ENCODE measurements at regions of chr6 and their contacts with region 1.

Region 1: DNA sequence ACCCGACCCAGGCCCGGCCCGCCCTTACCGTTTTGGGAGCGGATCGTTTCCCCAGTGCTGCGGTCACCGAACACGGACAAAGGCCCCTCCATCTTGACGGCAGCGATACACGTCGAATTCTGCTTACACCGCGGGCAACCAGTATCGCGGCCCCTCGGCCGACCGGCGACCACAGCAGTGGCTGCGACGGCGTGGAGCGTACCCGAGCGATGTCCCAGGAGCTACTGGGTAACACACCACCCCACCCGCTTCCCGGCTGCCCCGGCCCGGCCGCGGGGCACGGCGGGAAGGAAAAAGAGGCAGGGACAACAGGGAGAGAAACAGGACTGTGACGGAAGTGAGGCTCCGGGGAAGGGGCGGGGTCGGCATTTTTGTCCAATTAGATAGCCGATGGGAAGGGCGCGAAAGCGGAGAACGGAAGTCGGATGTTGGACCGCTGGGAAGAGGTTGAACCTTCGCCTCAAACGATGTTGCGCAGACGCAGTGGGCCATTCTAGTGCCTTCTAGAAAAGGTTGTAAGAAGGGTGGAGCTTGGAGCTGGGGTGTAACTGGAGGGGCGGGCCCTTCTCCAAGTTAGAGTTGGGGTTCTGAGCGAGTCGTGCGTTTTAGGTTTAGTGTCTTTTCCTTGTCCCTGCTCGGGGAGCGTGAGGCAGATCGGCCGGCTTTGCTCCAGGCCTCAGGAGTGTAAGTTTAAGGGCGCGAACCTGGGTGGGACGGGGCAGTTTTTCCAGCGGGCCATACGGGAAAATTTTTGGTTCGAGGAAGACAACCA is at the start of gene TCP1:
- DNase-seq: peak; percentile 96 to 100 (median 99)
- ATAC-seq: peak; percentile 81
- H3K4me3 ChIP-seq: peak within 1 kb of the TSS; percentile 86 to 99
- H3K4me3 Mint-ChIP-seq: peak within 1 kb of the TSS; percentile 99
- H3K27ac ChIP-seq: peak within 1 kb of the TSS; percentile 89 to 96
- H3K27ac Mint-ChIP-seq: peak within 1 kb of the TSS; percentile 98
- H3K4me1 ChIP-seq: peaks cover 57% of the 10 kb centered on the region
- H3K4me1 Mint-ChIP-seq: peaks cover 69% of the 10 kb centered on the region
- H3K27me3 ChIP-seq: no peaks in the 10 kb centered on the region
- H3K27me3 Mint-ChIP-seq: no peaks in the 10 kb centered on the region
- CTCF ChIP-seq: no peak
- total RNA-seq, gene TCP1: 221 to 222 TPM

Region 2: GRCh38 chr6:159726918-159727716 is 62.4 kb before region 1 on chr6 and contains the start of gene WTAP:
- CTCF ChIA-PET with region 1: interaction called, 4 read pairs
- POLR2A ChIA-PET with region 1: interaction called, 91 read pairs
- intact Hi-C with region 1: loop called (anchors 1 kb)
- DNase-seq: peak; percentile 94 to 99 (median 97)
- ATAC-seq: peak; percentile 88
- H3K4me3 ChIP-seq: peak within 1 kb of the TSS; percentile 88 to 94
- H3K4me3 Mint-ChIP-seq: peak within 1 kb of the TSS; percentile 88
- H3K27ac ChIP-seq: peak within 1 kb of the TSS; percentile 93 to 94
- H3K27ac Mint-ChIP-seq: peak within 1 kb of the TSS; percentile 99
- H3K4me1 ChIP-seq: peaks cover 51% of the 10 kb centered on the region
- H3K4me1 Mint-ChIP-seq: peaks cover 58% of the 10 kb centered on the region
- H3K27me3 ChIP-seq: no peaks in the 10 kb centered on the region
- H3K27me3 Mint-ChIP-seq: no peaks in the 10 kb centered on the region
- CTCF ChIP-seq: no peak
- total RNA-seq, gene WTAP: 224 to 226 TPM

Region 3: GRCh38 chr6:159761873-159762680 is 27.5 kb before region 1 on chr6 and contains the start of gene ACAT2:
- CTCF ChIA-PET with region 1: interaction called, 6 read pairs
- POLR2A ChIA-PET with region 1: interaction called, 60 read pairs
- intact Hi-C with region 1: loop called (anchors 1 kb)
- DNase-seq: peak; percentile 81 to 96 (median 91)
- ATAC-seq: peak; percentile 86
- H3K4me3 ChIP-seq: peak within 1 kb of the TSS; percentile 85 to 99
- H3K4me3 Mint-ChIP-seq: peak within 1 kb of the TSS; percentile 96
- H3K27ac ChIP-seq: peak within 1 kb of the TSS; percentile 97 to 99
- H3K27ac Mint-ChIP-seq: peak within 1 kb of the TSS; percentile 97
- H3K4me1 ChIP-seq: peaks cover 16% of the 10 kb centered on the region
- H3K4me1 Mint-ChIP-seq: peaks cover 29% of the 10 kb centered on the region
- H3K27me3 ChIP-seq: no peaks in the 10 kb centered on the region
- H3K27me3 Mint-ChIP-seq: no peaks in the 10 kb centered on the region
- CTCF ChIP-seq: no peak
- total RNA-seq, gene ACAT2: 23.3 to 24.1 TPM

Region 4: GRCh38 chr6:159833556-159833955 is 44.0 kb after region 1 on chr6:
- CTCF ChIA-PET with region 1: no interaction called
- POLR2A ChIA-PET with region 1: interaction called, 10 read pairs
- intact Hi-C with region 1: no loop called
- DNase-seq: no peak
- ATAC-seq: no peak
- H3K4me3 ChIP-seq: no peak overlapping the region
- H3K4me3 Mint-ChIP-seq: peak overlapping the region; percentile 15
- H3K27ac ChIP-seq: no peak overlapping the region
- H3K27ac Mint-ChIP-seq: peak overlapping the region; percentile 49
- H3K4me1 ChIP-seq: peaks cover 30% of the 10 kb centered on the region
- H3K4me1 Mint-ChIP-seq: peaks cover 41% of the 10 kb centered on the region
- H3K27me3 ChIP-seq: no peaks in the 10 kb centered on the region
- H3K27me3 Mint-ChIP-seq: no peaks in the 10 kb centered on the region
- CTCF ChIP-seq: no peak

Region 5: GRCh38 chr6:159941286-159942113 is 151.9 kb after region 1 on chr6:
- CTCF ChIA-PET with region 1: no interaction called
- POLR2A ChIA-PET with region 1: no interaction called
- intact Hi-C with region 1: loop called in 1 of 2 experiments (anchors 5 kb)
- DNase-seq: peak in 6 of 9 experiments; percentile 9 to 82 (median 23)
- ATAC-seq: peak; percentile 84
- H3K4me3 ChIP-seq: no peak overlapping the region
- H3K4me3 Mint-ChIP-seq: no peak overlapping the region
- H3K27ac ChIP-seq: no peak overlapping the region
- H3K27ac Mint-ChIP-seq: no peak overlapping the region
- H3K4me1 ChIP-seq: no peaks in the 10 kb centered on the region
- H3K4me1 Mint-ChIP-seq: peaks cover 3% of the 10 kb centered on the region
- H3K27me3 ChIP-seq: no peaks in the 10 kb centered on the region
- H3K27me3 Mint-ChIP-seq: no peaks in the 10 kb centered on the region
- CTCF ChIP-seq: peak; percentile 49

Region 6: DNA sequence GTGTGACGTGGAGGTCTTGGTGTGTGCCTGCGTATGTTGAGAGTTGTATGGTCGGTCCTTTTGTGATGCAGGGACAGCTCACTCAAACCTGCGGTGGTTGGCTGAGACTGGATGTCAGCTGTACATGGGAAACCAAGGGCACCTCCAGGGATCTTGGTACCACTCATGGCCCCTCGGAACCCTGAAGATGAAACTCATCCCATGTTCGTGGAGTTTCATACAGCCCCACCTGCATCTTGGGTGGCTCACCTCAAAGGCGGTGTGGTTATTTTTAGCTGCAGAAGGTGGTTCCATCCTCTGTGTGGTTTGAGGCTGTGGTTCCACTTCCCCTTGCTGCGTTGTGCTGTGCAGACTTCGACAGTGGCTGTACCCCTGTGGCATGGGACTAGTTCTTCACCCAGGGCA is 279.5 kb after region 1 on chr6:
- CTCF ChIA-PET with region 1: no interaction called
- POLR2A ChIA-PET with region 1: no interaction called
- intact Hi-C with region 1: loop called in 1 of 2 experiments (anchors 10 kb)
- DNase-seq: peak in 8 of 9 experiments; percentile 9 to 68 (median 38)
- ATAC-seq: peak; percentile 68
- H3K4me3 ChIP-seq: peak overlapping the region in 1 of 2 experiments; percentile 9
- H3K4me3 Mint-ChIP-seq: peak overlapping the region; percentile 27
- H3K27ac ChIP-seq: no peak overlapping the region
- H3K27ac Mint-ChIP-seq: peak overlapping the region; percentile 34
- H3K4me1 ChIP-seq: peaks cover 21% of the 10 kb centered on the region
- H3K4me1 Mint-ChIP-seq: peaks cover 30% of the 10 kb centered on the region
- H3K27me3 ChIP-seq: no peaks in the 10 kb centered on the region
- H3K27me3 Mint-ChIP-seq: no peaks in the 10 kb centered on the region
- CTCF ChIP-seq: no peak